Activated CD4-positive, alpha-beta memory T cell treated with anti-CD3 and anti-CD28 coated beads for 36 hours (primary cell): ENCODE measurements at regions of chr12 and their contacts with region 1.

Region 1: DNA sequence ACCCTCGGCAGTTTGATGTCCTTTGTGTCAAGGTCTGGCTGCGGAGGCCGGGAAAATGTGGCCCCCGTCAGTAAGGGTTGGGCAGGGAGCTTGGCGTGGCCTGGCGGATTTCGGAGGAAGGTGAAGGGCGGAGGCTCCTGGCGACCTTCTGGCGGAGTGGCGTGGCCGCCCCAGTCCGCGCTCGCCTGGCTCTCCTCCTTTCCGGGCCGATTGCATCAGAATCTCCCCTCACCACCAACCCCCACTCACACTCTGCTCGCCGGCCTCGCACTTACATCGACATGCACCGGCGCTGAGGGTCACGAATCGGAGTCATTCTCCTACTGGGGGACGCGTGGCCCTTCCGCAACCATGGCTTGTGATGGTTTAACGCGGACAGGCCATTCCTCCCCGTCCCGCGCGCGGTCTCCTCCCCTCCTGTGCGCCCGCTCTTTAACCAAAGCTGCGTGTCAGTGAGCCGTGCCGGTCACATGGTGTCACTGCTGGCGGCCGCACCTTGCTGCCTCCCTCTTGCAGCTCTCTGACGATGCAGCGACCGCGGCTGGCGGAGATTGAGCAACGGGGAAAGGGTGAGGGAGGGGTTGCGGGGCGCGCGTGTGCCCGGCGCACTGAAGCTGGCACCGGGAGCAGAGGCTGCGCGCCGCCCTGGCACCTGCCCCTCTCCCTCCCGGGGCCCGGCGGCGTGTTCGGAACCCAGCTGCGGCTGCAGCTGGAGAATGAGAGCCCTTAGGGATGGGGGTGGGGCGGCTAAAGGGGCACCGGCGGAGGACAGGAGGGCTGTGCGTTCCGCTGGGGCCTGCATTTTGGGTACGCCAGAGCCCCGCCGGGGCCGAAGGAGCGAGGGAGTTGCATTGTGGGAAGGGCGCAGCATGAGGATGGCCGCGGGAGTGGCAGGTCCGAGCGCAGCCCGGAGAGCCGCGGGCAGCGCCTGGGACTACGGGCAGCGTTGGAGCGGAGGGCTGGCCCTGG is at the start of gene SLC38A1:
- DNase-seq: peak; percentile 92
- H3K4me3 Mint-ChIP-seq: no peak within 1 kb of the TSS
- H3K27ac Mint-ChIP-seq: no peak within 1 kb of the TSS
- H3K4me1 Mint-ChIP-seq: peaks cover 23% of the 10 kb centered on the region
- H3K27me3 Mint-ChIP-seq: no peaks in the 10 kb centered on the region
- total RNA-seq, gene SLC38A1: 142 TPM

Region 2: DNA sequence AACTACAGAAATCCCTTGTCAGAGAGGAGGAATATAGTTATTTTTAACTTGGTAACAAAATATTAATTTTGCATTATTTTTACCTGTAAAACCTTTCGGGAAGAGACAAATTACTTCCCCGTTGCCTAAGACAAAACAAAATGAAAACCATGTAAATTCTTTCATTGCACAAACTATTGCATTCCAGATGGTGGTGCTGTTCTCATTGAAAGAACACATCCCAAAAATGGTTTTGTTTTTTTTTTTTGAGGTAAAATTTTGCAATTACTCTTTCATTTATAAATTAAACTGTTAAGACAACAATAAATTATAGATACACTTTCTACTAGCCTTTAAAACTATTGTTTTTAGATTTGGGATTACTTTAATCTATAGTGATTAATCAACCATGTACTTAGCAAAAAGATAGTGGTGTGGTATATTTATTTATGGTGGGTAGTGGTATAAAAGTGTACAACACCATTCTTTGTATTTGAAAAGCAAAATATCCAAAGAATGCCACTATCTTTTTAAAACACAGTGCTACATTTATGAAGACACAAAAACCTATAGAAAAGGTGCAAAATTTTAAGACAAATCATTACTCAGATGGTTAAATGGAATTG is 115.5 kb before region 1 on chr12:
- CTCF ChIA-PET with region 1: interaction called, 3 read pairs
- POLR2A ChIA-PET with region 1: no interaction called
- intact Hi-C with region 1: loop called (anchors 1 kb)
- DNase-seq: no peak
- H3K4me3 Mint-ChIP-seq: no peak overlapping the region
- H3K27ac Mint-ChIP-seq: no peak overlapping the region
- H3K4me1 Mint-ChIP-seq: peaks cover 5% of the 10 kb centered on the region
- H3K27me3 Mint-ChIP-seq: peaks cover 1% of the 10 kb centered on the region

Region 3: DNA sequence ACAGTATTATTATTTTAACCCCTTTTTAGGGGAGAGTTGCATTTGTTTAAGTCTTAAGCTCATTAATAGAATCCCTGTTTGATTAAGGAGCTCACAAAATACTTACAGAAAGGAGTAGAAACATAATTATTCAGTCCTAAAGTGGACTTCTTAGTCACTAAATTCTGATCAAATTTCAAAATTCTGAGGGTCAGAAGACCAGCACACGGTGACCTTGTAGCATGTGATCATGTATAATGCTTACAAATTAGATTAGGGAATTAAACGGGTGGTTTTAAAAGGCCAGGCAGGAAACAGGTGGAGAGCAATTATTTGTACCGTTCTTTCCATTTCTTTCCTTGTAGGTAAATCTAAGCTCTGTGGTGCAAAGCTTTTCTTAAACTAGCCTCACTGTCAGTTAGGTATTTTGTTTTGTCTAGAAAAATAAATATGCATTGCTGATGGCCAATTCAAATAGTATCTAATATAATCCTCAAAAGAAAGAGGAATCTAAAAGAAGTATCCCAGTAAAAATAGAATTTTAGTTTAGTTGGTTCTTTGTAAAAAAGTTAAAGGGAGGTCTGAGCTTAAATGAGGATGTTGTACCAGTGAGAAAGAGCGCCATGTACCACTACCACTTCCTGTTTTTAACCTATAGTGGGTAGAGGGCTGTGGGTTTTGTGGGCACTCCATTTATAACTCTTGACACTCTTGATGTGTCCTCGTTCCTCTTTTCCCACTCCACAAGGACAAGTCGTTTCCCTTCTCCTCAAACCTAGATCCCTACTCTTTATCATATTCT is 51.1 kb before region 1 on chr12:
- CTCF ChIA-PET with region 1: interaction called, 14 read pairs
- POLR2A ChIA-PET with region 1: interaction called, 177 read pairs
- intact Hi-C with region 1: loop called (anchors 1 kb)
- DNase-seq: peak; percentile 75
- H3K4me3 Mint-ChIP-seq: peak overlapping the region; percentile 61
- H3K27ac Mint-ChIP-seq: peak overlapping the region; percentile 98
- H3K4me1 Mint-ChIP-seq: peaks cover 95% of the 10 kb centered on the region
- H3K27me3 Mint-ChIP-seq: no peaks in the 10 kb centered on the region

Region 4: DNA sequence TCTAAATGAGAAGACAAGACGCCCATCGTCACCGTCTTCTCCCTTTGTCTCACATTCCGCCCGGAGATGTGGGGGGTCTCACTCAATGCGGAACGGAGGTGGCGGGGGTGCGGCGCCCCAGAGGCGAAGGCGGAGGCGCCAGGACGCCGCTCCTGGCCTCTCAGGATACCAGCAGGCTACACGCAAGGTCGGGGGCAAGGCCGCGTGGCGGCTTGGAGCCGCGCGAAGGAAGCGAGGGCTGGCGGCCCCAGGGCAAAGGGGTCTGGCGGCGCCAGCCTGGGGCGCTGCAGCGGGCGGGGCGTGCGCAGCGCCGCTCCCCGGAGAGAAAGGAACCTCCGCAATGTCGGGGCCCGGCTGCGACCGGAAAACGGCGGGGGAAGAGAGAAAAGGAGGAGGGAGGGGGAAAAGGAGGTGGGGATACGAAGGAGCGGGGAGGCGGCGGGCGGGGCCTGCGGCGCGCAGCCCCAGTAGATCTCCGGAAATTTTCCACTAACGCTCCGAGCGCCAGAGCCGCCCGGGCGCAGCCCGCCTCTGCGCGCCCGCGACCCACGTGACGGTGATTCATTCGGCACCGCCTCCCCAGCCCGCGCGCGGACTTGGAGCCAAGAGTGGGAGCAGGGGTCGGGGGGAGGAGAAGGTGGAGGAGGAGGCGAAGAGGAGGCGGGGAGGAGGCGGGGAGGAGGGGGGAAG is 114.2 kb after region 1 on chr12:
- CTCF ChIA-PET with region 1: no interaction called
- POLR2A ChIA-PET with region 1: interaction called, 6 read pairs
- intact Hi-C with region 1: loop called (anchors 1 kb)
- DNase-seq: peak; percentile 96
- H3K4me3 Mint-ChIP-seq: peak overlapping the region; percentile 80
- H3K27ac Mint-ChIP-seq: peak overlapping the region; percentile 92
- H3K4me1 Mint-ChIP-seq: peaks cover 27% of the 10 kb centered on the region
- H3K27me3 Mint-ChIP-seq: no peaks in the 10 kb centered on the region

Region 5: DNA sequence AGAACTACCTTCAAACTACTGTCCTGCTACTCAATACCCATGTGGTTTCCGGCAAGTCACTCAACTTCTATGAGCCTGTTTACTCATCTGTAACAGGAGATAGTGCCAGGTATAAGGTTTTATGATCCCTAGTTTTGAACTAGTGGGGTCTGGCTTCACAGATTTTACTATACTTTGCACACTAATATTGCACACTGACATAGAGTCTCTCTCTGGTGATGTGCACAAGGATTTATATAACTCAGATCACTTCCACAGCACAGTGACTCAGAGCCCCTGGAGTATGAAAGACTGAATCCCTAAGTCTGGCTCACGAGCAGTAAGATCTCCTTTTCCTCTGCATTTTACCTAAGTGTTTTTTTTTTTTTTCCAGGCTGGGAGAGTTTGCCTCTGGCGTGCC is 173.4 kb after region 1 on chr12:
- CTCF ChIA-PET with region 1: no interaction called
- POLR2A ChIA-PET with region 1: no interaction called
- intact Hi-C with region 1: no loop called
- DNase-seq: no peak
- H3K4me3 Mint-ChIP-seq: no peak overlapping the region
- H3K27ac Mint-ChIP-seq: no peak overlapping the region
- H3K4me1 Mint-ChIP-seq: peaks cover 5% of the 10 kb centered on the region
- H3K27me3 Mint-ChIP-seq: no peaks in the 10 kb centered on the region

Region 6: DNA sequence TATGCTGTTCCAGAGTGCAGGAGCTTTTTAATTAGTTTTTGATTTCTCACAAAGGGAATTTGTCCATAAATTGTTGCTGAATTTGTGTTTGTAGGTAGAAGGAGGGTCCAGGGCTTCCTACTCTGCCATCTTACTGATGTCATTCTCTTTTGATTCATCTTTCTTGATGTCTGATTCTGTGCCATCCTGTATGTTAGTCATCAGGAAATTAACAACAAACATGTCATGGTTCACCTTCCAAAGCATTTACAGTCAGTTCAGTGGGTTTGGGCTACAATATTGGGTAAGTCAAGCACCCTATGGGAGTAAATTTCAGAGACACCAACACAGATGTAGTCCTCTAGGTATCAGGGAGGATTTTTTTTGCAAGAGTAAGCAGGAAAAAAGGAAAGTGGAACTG is 238.9 kb after region 1 on chr12:
- CTCF ChIA-PET with region 1: no interaction called
- POLR2A ChIA-PET with region 1: no interaction called
- intact Hi-C with region 1: no loop called
- DNase-seq: no peak
- H3K4me3 Mint-ChIP-seq: no peak overlapping the region
- H3K27ac Mint-ChIP-seq: no peak overlapping the region
- H3K4me1 Mint-ChIP-seq: peaks cover 5% of the 10 kb centered on the region
- H3K27me3 Mint-ChIP-seq: no peaks in the 10 kb centered on the region

Region 7: DNA sequence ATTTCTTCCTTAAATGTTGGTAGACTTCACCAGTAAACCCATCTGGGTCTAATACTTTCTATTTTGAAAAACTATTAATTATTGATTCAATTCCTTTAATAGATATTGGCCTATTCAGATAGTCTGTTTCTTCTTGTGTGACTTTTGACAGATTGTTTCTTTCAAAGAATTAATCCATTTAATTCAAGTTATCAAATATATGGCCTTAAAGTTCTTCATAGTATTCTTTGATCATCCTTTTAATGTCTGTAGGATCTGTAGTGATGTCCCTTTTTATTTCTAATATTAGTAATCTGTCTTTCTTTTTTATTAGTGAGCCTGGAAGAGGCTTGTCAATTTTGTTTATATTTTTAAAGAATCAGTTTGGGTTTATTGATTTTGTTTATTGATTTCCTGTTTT is 366.9 kb after region 1 on chr12:
- CTCF ChIA-PET with region 1: no interaction called
- POLR2A ChIA-PET with region 1: no interaction called
- intact Hi-C with region 1: no loop called
- DNase-seq: no peak
- H3K4me3 Mint-ChIP-seq: no peak overlapping the region
- H3K27ac Mint-ChIP-seq: no peak overlapping the region
- H3K4me1 Mint-ChIP-seq: peaks cover 4% of the 10 kb centered on the region
- H3K27me3 Mint-ChIP-seq: no peaks in the 10 kb centered on the region

Region 8: GRCh38 chr12:46661110-46661845 is 392.4 kb after region 1 on chr12:
- CTCF ChIA-PET with region 1: no interaction called
- POLR2A ChIA-PET with region 1: no interaction called
- intact Hi-C with region 1: loop called (anchors 5 kb)
- DNase-seq: no peak
- H3K4me3 Mint-ChIP-seq: no peak overlapping the region
- H3K27ac Mint-ChIP-seq: no peak overlapping the region
- H3K4me1 Mint-ChIP-seq: peaks cover 34% of the 10 kb centered on the region
- H3K27me3 Mint-ChIP-seq: no peaks in the 10 kb centered on the region

Region 9: DNA sequence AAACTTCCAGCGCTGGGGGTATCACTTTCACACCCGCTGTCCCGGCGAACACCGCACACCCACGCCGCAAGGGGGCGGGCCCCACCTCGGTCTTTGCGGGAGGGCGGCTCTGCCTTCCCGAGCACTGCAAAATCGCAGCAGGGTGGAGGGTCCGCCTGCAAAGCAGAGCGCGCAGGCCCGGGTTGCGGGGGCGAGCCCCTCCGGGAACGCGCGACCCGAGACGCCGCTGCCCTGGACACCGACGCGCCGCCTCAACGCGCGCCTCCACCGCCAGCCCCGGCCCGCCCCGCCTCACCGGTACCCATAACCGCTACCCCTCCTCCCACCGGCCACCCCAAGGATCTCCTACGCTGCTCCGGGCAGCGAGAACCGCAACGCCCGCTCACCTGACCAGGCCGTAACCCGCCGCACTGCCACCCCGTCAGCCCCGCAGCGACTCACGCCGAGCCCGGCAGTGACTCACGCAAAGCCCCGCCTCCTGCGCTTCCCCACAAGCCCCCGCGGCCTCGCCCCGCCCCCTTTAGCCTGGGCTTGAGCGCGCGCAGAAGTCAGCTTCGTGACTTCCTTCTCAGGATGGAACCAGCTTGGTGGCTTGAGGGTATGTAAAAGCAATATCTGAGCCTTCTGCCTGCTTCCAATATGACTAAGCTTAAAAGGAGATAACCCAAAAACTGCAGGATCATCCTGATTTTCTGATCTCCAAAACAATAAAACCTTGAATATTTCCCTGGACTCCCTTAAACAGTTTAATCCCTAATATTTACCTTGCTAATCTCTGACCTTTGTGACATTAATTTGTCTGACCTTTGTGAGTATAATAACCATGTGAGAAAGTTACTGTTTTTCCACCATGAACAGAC is 1436.9 kb after region 1 on chr12 and contains the start of gene RPAP3:
- CTCF ChIA-PET with region 1: no interaction called
- POLR2A ChIA-PET with region 1: no interaction called
- intact Hi-C with region 1: loop called (anchors 5 kb)
- DNase-seq: peak; percentile 99
- H3K4me3 Mint-ChIP-seq: peak within 1 kb of the TSS; percentile 96
- H3K27ac Mint-ChIP-seq: peak within 1 kb of the TSS; percentile 95
- H3K4me1 Mint-ChIP-seq: peaks cover 50% of the 10 kb centered on the region
- H3K27me3 Mint-ChIP-seq: no peaks in the 10 kb centered on the region
- total RNA-seq, gene RPAP3: 49.4 to 50.2 TPM